ENCODE measurements at regions of chr14 and their contacts with region 1.

Region 1: DNA sequence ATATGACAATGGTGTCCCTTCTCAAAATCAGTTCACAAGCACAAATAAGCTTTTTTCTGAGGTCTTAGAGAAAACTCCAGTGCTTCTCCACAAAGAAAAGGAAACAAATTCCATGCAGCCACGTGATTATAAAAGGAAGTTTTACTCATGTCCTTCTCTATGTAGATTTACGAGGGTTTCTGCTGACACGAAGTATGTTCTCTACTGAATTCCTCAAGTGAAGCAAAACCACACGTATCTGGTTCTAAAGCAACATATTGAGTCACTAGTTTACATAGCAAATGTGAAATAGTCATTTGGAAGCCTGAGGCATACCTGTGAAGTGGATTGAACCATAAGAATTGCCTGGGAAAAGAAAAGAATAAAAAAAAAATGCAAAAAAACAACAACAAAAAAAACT is 31.9 kb downstream of the BMP4 start:
- DNase-seq: peak; percentile 86
- H3K4me3 Mint-ChIP-seq: peak overlapping the region; percentile 30
- H3K27ac Mint-ChIP-seq: peak overlapping the region; percentile 92
- H3K4me1 Mint-ChIP-seq: peaks cover 28% of the 10 kb centered on the region
- H3K27me3 Mint-ChIP-seq: no peaks in the 10 kb centered on the region
- CTCF ChIP-seq: no peak

Region 2: DNA sequence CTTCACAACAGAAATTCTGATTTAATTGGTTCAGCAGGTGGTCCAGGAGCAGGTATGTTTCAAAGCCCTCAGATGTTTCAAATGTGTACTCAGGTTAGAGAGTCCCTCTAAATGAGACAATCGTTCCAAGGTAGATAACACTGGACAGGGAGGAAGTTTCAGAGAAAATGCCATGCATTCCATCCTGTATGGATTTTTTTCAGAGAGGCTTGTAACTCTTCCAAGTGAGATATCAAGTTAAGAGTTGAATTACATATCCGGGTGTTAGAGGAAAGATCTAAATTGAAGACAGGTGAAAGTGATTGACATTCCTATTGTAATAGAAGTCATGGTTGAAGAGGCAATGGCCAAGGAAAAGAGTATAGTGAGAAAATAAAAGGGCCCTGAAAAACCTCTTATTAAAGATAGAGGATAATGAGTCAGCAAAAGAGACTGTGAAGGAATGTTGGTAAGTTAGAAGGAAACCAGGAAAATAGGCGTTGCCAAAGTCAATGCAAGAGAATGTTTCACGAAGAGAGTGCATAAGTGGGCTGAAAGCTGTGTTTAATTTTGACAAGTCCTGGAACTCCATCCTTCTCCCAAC is 73.9 kb before region 1 on chr14:
- CTCF ChIA-PET with region 1: no interaction called
- POLR2A ChIA-PET with region 1: no interaction called
- intact Hi-C with region 1: loop called (anchors 1 kb)
- DNase-seq: peak; percentile 25
- H3K4me3 Mint-ChIP-seq: no peak overlapping the region
- H3K27ac Mint-ChIP-seq: peak overlapping the region; percentile 59
- H3K4me1 Mint-ChIP-seq: peaks cover 12% of the 10 kb centered on the region
- H3K27me3 Mint-ChIP-seq: no peaks in the 10 kb centered on the region
- CTCF ChIP-seq: no peak